Mammary epithelial cell (primary cell): ENCODE measurements at regions of chr4 and their contacts with region 1.

Region 1: DNA sequence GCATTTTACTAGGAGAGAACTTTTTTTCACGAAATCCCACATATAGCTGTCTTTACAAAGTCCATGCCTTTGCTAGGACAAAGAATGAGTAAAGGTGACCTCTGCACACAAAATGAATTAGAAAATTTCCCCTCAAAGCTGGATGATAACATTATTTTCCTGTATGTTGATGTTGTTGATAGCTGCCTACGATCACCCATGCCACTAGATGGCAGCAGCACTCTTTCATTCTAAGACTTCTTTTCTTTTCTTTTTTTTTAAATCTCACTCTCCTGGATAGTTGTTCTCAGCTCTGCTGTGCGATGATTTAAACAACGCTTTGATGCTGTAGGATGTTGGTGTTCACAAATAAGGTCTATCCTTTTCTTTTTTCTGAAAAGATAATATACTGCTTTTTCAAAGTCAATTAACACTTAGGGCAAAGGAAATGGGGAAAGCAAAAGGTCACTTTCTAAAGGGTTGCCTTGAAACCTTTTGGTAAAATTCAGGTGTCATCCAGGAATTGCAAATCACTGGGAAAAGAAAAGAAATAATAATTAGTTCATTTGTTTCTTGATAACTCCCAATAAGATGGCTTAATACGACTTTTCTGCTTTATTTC is 266.8 kb downstream of the C4orf33 start:
- DNase-seq: peak; percentile 51
- H3K4me3 ChIP-seq: no peak overlapping the region
- H3K27ac ChIP-seq: no peak overlapping the region
- H3K4me1 ChIP-seq: peaks cover 11% of the 10 kb centered on the region
- H3K27me3 ChIP-seq: no peaks in the 10 kb centered on the region
- CTCF ChIP-seq: peak; percentile 83 to 88

Region 2: GRCh38 chr4:129043523-129043922 is 319.3 kb before region 1 on chr4:
- CTCF ChIA-PET with region 1: no interaction called
- dilution Hi-C with region 1: no loop called
- in situ Hi-C with region 1: no loop called
- intact Hi-C with region 1: loop called (anchors 5 kb)
- DNase-seq: no peak
- H3K4me3 ChIP-seq: no peak overlapping the region
- H3K27ac ChIP-seq: no peak overlapping the region
- H3K4me1 ChIP-seq: no peaks in the 10 kb centered on the region
- H3K27me3 ChIP-seq: no peaks in the 10 kb centered on the region
- CTCF ChIP-seq: peak in 1 of 2 donors; percentile 42

Region 3: GRCh38 chr4:129377131-129377845 is 14.5 kb after region 1 on chr4:
- CTCF ChIA-PET with region 1: no interaction called
- dilution Hi-C with region 1: no loop called
- in situ Hi-C with region 1: no loop called
- intact Hi-C with region 1: no loop called
- DNase-seq: peak; percentile 45
- H3K4me3 ChIP-seq: peak overlapping the region in 1 of 3 experiments; percentile 8
- H3K27ac ChIP-seq: peak overlapping the region; percentile 40
- H3K4me1 ChIP-seq: peaks cover 18% of the 10 kb centered on the region
- H3K27me3 ChIP-seq: no peaks in the 10 kb centered on the region
- CTCF ChIP-seq: no peak

Region 4: GRCh38 chr4:129515356-129515755 is 152.6 kb after region 1 on chr4:
- CTCF ChIA-PET with region 1: no interaction called
- dilution Hi-C with region 1: no loop called
- in situ Hi-C with region 1: no loop called
- intact Hi-C with region 1: no loop called
- DNase-seq: no peak
- H3K4me3 ChIP-seq: no peak overlapping the region
- H3K27ac ChIP-seq: no peak overlapping the region
- H3K4me1 ChIP-seq: no peaks in the 10 kb centered on the region
- H3K27me3 ChIP-seq: no peaks in the 10 kb centered on the region
- CTCF ChIP-seq: no peak

Region 5: GRCh38 chr4:129641179-129641578 is 278.4 kb after region 1 on chr4:
- CTCF ChIA-PET with region 1: interaction called, 9 read pairs
- dilution Hi-C with region 1: loop called (anchors 25 kb)
- in situ Hi-C with region 1: loop called (anchors 5 to 10 kb)
- intact Hi-C with region 1: loop called (anchors 1 kb)
- DNase-seq: peak; percentile 29
- H3K4me3 ChIP-seq: no peak overlapping the region
- H3K27ac ChIP-seq: no peak overlapping the region
- H3K4me1 ChIP-seq: no peaks in the 10 kb centered on the region
- H3K27me3 ChIP-seq: peaks cover 2% of the 10 kb centered on the region
- CTCF ChIP-seq: peak; percentile 79

Region 6: GRCh38 chr4:129929052-129929451 is 566.3 kb after region 1 on chr4:
- CTCF ChIA-PET with region 1: no interaction called
- dilution Hi-C with region 1: no loop called
- in situ Hi-C with region 1: no loop called
- intact Hi-C with region 1: loop called (anchors 10 kb)
- DNase-seq: no peak
- H3K4me3 ChIP-seq: no peak overlapping the region
- H3K27ac ChIP-seq: no peak overlapping the region
- H3K4me1 ChIP-seq: no peaks in the 10 kb centered on the region
- H3K27me3 ChIP-seq: no peaks in the 10 kb centered on the region
- CTCF ChIP-seq: peak in 1 of 2 donors; percentile 12

Region 7: DNA sequence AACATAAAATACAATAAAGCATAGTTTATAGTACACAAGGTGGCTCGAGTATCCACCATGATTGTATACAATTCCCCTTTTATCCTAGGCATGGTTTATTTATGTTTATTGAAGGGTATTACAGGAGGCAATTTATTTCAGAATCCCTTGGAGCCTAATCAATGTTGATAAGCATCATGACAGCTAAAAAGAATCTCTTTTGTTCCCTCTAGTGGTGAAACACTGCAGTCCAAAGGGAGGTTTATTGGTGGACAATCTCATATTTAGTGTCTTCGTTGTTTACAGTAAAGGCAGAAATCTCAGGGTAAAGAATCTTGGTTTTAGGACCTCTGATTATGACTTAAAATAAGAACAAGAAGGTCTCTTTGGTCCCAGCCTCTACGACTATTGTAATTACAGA is 1445.7 kb after region 1 on chr4:
- CTCF ChIA-PET with region 1: no interaction called
- dilution Hi-C with region 1: no loop called
- in situ Hi-C with region 1: loop called in 1 of 2 experiments (anchors 25 kb)
- intact Hi-C with region 1: no loop called
- DNase-seq: peak; percentile 24
- H3K4me3 ChIP-seq: no peak overlapping the region
- H3K27ac ChIP-seq: no peak overlapping the region
- H3K4me1 ChIP-seq: no peaks in the 10 kb centered on the region
- H3K27me3 ChIP-seq: no peaks in the 10 kb centered on the region
- CTCF ChIP-seq: peak; percentile 76 to 78